Naive thymus-derived CD4-positive, alpha-beta T cell (primary cell): ENCODE measurements at regions of chr3 and their contacts with region 1.

Region 1: GRCh38 chr3:192917404-192918274 is at the start of gene MB21D2:
- DNase-seq: peak; percentile 18 to 74 (median 45)
- ATAC-seq: peak; percentile 76
- H3K4me3 ChIP-seq: peak within 1 kb of the TSS; percentile 88
- H3K4me3 Mint-ChIP-seq: peak within 1 kb of the TSS; percentile 88 to 99 (median 92)
- H3K27ac ChIP-seq: peak within 1 kb of the TSS; percentile 72
- H3K27ac Mint-ChIP-seq: peak within 1 kb of the TSS; percentile 80 to 96 (median 90)
- H3K4me1 ChIP-seq: peaks cover 0 to 11% of the 10 kb centered on the region in 2 donors
- H3K4me1 Mint-ChIP-seq: peaks cover 6 to 56% (median 42%) of the 10 kb centered on the region in 7 donors
- H3K27me3 ChIP-seq: no peaks in the 10 kb centered on the region
- H3K27me3 Mint-ChIP-seq: peaks cover 43 to 70% (median 58%) of the 10 kb centered on the region in 5 donors
- total RNA-seq, gene MB21D2: 1.7 to 21.5 (median 3.3) TPM

Region 2: GRCh38 chr3:192514081-192514753 is 403.4 kb before region 1 on chr3:
- CTCF ChIA-PET with region 1: no interaction called
- POLR2A ChIA-PET with region 1: no interaction called
- intact Hi-C with region 1: no loop called
- DNase-seq: no peak
- ATAC-seq: no peak
- H3K4me3 ChIP-seq: no peak overlapping the region
- H3K4me3 Mint-ChIP-seq: peak overlapping the region in 6 of 10 donors; percentile 12 to 55 (median 46)
- H3K27ac ChIP-seq: no peak overlapping the region
- H3K27ac Mint-ChIP-seq: no peak overlapping the region
- H3K4me1 ChIP-seq: no peaks in the 10 kb centered on the region
- H3K4me1 Mint-ChIP-seq: peaks cover 2 to 18% (median 9%) of the 10 kb centered on the region in 7 donors
- H3K27me3 ChIP-seq: peaks cover 0 to 3% of the 10 kb centered on the region in 2 donors
- H3K27me3 Mint-ChIP-seq: peaks cover 45 to 63% (median 56%) of the 10 kb centered on the region in 5 donors

Region 3: GRCh38 chr3:192841428-192841827 is 76.2 kb before region 1 on chr3:
- CTCF ChIA-PET with region 1: no interaction called
- POLR2A ChIA-PET with region 1: no interaction called
- intact Hi-C with region 1: no loop called
- DNase-seq: no peak
- ATAC-seq: no peak
- H3K4me3 ChIP-seq: no peak overlapping the region
- H3K4me3 Mint-ChIP-seq: no peak overlapping the region
- H3K27ac ChIP-seq: no peak overlapping the region
- H3K27ac Mint-ChIP-seq: no peak overlapping the region
- H3K4me1 ChIP-seq: no peaks in the 10 kb centered on the region
- H3K4me1 Mint-ChIP-seq: peaks cover 0 to 59% (median 20%) of the 10 kb centered on the region in 7 donors
- H3K27me3 ChIP-seq: no peaks in the 10 kb centered on the region
- H3K27me3 Mint-ChIP-seq: peaks cover 0 to 7% (median 0%) of the 10 kb centered on the region in 5 donors

Region 4: GRCh38 chr3:192851821-192852424 is 65.7 kb before region 1 on chr3:
- CTCF ChIA-PET with region 1: no interaction called
- POLR2A ChIA-PET with region 1: no interaction called
- intact Hi-C with region 1: loop called in 1 of 2 experiments (anchors 2 kb)
- DNase-seq: no peak
- ATAC-seq: peak; percentile 62
- H3K4me3 ChIP-seq: no peak overlapping the region
- H3K4me3 Mint-ChIP-seq: peak overlapping the region in 1 of 10 donors; percentile 12
- H3K27ac ChIP-seq: no peak overlapping the region
- H3K27ac Mint-ChIP-seq: peak overlapping the region in 1 of 9 donors; percentile 43
- H3K4me1 ChIP-seq: no peaks in the 10 kb centered on the region
- H3K4me1 Mint-ChIP-seq: peaks cover 0 to 58% (median 10%) of the 10 kb centered on the region in 7 donors
- H3K27me3 ChIP-seq: no peaks in the 10 kb centered on the region
- H3K27me3 Mint-ChIP-seq: peaks cover 0 to 4% (median 0%) of the 10 kb centered on the region in 5 donors

Region 5: DNA sequence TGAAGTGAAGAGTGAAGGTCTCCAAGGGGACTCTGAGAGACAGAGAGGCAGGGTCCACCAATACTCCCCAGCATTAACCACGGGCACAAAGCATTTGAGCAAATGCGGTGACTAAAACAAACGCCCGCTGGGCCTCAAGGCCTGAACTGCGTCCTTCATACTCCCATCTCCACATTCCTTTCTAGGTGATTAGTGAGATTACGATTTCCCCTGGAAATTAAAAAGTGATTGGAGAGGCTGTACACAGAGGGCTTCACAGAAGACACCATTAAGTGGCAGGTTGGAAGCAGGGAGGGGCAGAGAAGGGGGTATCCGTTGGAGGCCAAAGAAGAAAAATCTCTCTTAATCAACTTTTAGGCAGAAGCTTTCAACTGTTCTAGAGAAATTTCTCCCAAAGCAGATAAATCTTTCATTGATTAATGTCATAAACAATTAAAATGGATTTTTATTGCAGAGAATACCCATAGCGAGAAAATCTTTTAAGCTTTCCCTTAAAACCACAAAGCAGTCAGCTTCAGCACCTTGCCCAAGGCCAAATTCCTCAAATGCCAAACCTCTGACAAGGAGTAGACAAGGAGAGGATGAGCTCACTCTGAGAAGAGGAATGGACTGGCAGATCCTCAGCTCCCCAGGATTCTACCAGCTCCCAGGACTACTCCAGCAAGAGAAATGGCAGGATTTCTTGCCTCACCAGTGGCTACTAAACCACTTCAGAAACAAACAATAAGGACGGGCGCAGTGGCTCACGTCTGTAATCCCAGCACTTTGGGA is 38.1 kb before region 1 on chr3:
- CTCF ChIA-PET with region 1: no interaction called
- POLR2A ChIA-PET with region 1: no interaction called
- intact Hi-C with region 1: loop called in 1 of 2 experiments (anchors 5 kb)
- DNase-seq: no peak
- ATAC-seq: no peak
- H3K4me3 ChIP-seq: no peak overlapping the region
- H3K4me3 Mint-ChIP-seq: no peak overlapping the region
- H3K27ac ChIP-seq: no peak overlapping the region
- H3K27ac Mint-ChIP-seq: no peak overlapping the region
- H3K4me1 ChIP-seq: no peaks in the 10 kb centered on the region
- H3K4me1 Mint-ChIP-seq: peaks cover 0 to 31% (median 4%) of the 10 kb centered on the region in 7 donors
- H3K27me3 ChIP-seq: no peaks in the 10 kb centered on the region
- H3K27me3 Mint-ChIP-seq: peaks cover 0 to 6% (median 0%) of the 10 kb centered on the region in 5 donors

Region 6: GRCh38 chr3:192899540-192899982 is 18.1 kb before region 1 on chr3:
- CTCF ChIA-PET with region 1: interaction called, 3 read pairs
- POLR2A ChIA-PET with region 1: interaction called, 14 read pairs
- intact Hi-C with region 1: loop called (anchors 1 to 2 kb)
- DNase-seq: no peak
- ATAC-seq: no peak
- H3K4me3 ChIP-seq: no peak overlapping the region
- H3K4me3 Mint-ChIP-seq: peak overlapping the region in 5 of 10 donors; percentile 7 to 67 (median 37)
- H3K27ac ChIP-seq: peak overlapping the region; percentile 43
- H3K27ac Mint-ChIP-seq: peak overlapping the region in 5 of 9 donors; percentile 27 to 92 (median 81)
- H3K4me1 ChIP-seq: peaks cover 4 to 30% of the 10 kb centered on the region in 2 donors
- H3K4me1 Mint-ChIP-seq: peaks cover 4 to 77% (median 49%) of the 10 kb centered on the region in 7 donors
- H3K27me3 ChIP-seq: no peaks in the 10 kb centered on the region
- H3K27me3 Mint-ChIP-seq: peaks cover 0 to 14% (median 3%) of the 10 kb centered on the region in 5 donors

Region 7: GRCh38 chr3:192943393-192943792 is 25.8 kb after region 1 on chr3:
- CTCF ChIA-PET with region 1: no interaction called
- POLR2A ChIA-PET with region 1: no interaction called
- intact Hi-C with region 1: no loop called
- DNase-seq: no peak
- ATAC-seq: no peak
- H3K4me3 ChIP-seq: no peak overlapping the region
- H3K4me3 Mint-ChIP-seq: no peak overlapping the region
- H3K27ac ChIP-seq: no peak overlapping the region
- H3K27ac Mint-ChIP-seq: no peak overlapping the region
- H3K4me1 ChIP-seq: no peaks in the 10 kb centered on the region
- H3K4me1 Mint-ChIP-seq: no peaks in the 10 kb centered on the region
- H3K27me3 ChIP-seq: no peaks in the 10 kb centered on the region
- H3K27me3 Mint-ChIP-seq: peaks cover 0 to 18% (median 0%) of the 10 kb centered on the region in 5 donors

Region 8: GRCh38 chr3:193040836-193041672 is 123.4 kb after region 1 on chr3:
- CTCF ChIA-PET with region 1: no interaction called
- POLR2A ChIA-PET with region 1: no interaction called
- intact Hi-C with region 1: loop called (anchors 1 kb)
- DNase-seq: peak in 7 of 9 donors; percentile 13 to 50 (median 30)
- ATAC-seq: peak; percentile 26
- H3K4me3 ChIP-seq: no peak overlapping the region
- H3K4me3 Mint-ChIP-seq: no peak overlapping the region
- H3K27ac ChIP-seq: no peak overlapping the region
- H3K27ac Mint-ChIP-seq: no peak overlapping the region
- H3K4me1 ChIP-seq: no peaks in the 10 kb centered on the region
- H3K4me1 Mint-ChIP-seq: peaks cover 0 to 9% (median 0%) of the 10 kb centered on the region in 7 donors
- H3K27me3 ChIP-seq: no peaks in the 10 kb centered on the region
- H3K27me3 Mint-ChIP-seq: peaks cover 0 to 9% (median 0%) of the 10 kb centered on the region in 5 donors

Region 9: GRCh38 chr3:193053046-193053435 is 135.4 kb after region 1 on chr3:
- CTCF ChIA-PET with region 1: no interaction called
- POLR2A ChIA-PET with region 1: no interaction called
- intact Hi-C with region 1: no loop called
- DNase-seq: no peak
- ATAC-seq: no peak
- H3K4me3 ChIP-seq: no peak overlapping the region
- H3K4me3 Mint-ChIP-seq: no peak overlapping the region
- H3K27ac ChIP-seq: no peak overlapping the region
- H3K27ac Mint-ChIP-seq: no peak overlapping the region
- H3K4me1 ChIP-seq: no peaks in the 10 kb centered on the region
- H3K4me1 Mint-ChIP-seq: no peaks in the 10 kb centered on the region
- H3K27me3 ChIP-seq: no peaks in the 10 kb centered on the region
- H3K27me3 Mint-ChIP-seq: peaks cover 4 to 27% (median 13%) of the 10 kb centered on the region in 5 donors